ENCODE measurements at regions of chr7 and their contacts with region 1.

Region 1: DNA sequence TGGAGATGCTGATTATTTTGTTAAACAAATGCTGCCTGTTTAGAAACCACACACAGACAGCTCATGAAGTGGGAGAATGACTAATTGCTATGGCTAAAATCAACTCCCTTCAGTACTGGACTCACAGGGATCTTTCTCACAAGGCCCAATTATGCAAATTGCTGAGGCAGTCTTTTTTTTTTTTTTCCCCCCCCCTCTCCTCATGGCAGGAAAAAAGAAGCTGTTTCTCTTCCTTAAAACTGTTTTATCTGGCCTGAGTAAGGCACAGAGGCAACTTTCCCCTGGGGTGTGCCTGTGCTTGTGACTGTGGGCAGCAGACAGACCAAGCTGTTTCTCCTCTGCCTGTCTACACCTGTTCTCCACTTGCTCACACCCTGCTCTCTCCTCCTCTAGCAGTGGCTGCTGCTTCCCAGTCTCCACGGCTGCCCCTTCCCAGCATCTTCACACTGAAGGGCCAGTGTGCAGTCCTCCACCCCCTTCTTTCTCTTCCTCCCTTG is 65.4 kb upstream of the STEAP1B start:
- H3K4me3 Mint-ChIP-seq: peak overlapping the region; percentile 35
- H3K27ac Mint-ChIP-seq: peak overlapping the region; percentile 86
- H3K4me1 Mint-ChIP-seq: peaks cover 72% of the 10 kb centered on the region
- H3K27me3 Mint-ChIP-seq: peaks cover 42% of the 10 kb centered on the region

Region 2: DNA sequence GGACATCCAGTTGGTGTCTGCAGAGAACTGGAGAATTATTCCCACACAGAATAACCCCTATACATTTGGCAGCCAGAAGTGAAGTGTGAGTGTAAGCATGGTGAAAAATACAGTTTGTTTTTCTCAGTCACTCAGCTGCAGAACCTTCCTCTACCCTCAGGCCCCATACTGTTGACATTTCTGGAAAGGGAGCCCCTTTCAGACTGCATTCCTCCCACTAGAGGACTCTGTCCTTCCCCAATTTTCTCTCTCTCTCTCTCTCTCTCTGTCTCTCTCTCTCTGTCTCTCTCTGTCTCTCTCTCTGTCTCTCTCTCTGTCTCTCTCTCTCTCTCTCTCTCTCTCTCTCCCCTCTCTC is 21.4 kb after region 1 on chr7:
- intact Hi-C with region 1: loop called (anchors 1 kb)
- H3K4me3 Mint-ChIP-seq: no peak overlapping the region
- H3K27ac Mint-ChIP-seq: peak overlapping the region; percentile 71
- H3K4me1 Mint-ChIP-seq: peaks cover 59% of the 10 kb centered on the region
- H3K27me3 Mint-ChIP-seq: peaks cover 21% of the 10 kb centered on the region

Region 3: GRCh38 chr7:22969010-22969431 is 403.7 kb after region 1 on chr7:
- intact Hi-C with region 1: no loop called
- H3K4me3 Mint-ChIP-seq: no peak overlapping the region
- H3K27ac Mint-ChIP-seq: no peak overlapping the region
- H3K4me1 Mint-ChIP-seq: no peaks in the 10 kb centered on the region
- H3K27me3 Mint-ChIP-seq: no peaks in the 10 kb centered on the region

Measured in dendritic cell treated with granulocyte-macrophage colony-stimulating factor and Interleukin-4, amounts not matched to agents 40 ng/mL and 50 ng/mL, for 4 days (primary cell).